Naive thymus-derived CD4-positive, alpha-beta T cell (primary cell): ENCODE measurements at regions of chr12 and their contacts with region 1.

Region 1: GRCh38 chr12:46675736-46676135 is 150.1 kb downstream of the SLC38A4 start:
- DNase-seq: peak in 5 of 9 donors; percentile 24 to 38 (median 34)
- ATAC-seq: no peak
- H3K4me3 ChIP-seq: no peak overlapping the region
- H3K4me3 Mint-ChIP-seq: no peak overlapping the region
- H3K27ac ChIP-seq: no peak overlapping the region
- H3K27ac Mint-ChIP-seq: no peak overlapping the region
- H3K4me1 ChIP-seq: no peaks in the 10 kb centered on the region
- H3K4me1 Mint-ChIP-seq: peaks cover 0 to 16% (median 0%) of the 10 kb centered on the region in 7 donors
- H3K27me3 ChIP-seq: no peaks in the 10 kb centered on the region
- H3K27me3 Mint-ChIP-seq: peaks cover 0 to 3% (median 0%) of the 10 kb centered on the region in 5 donors

Region 2: GRCh38 chr12:47021298-47021697 is 345.6 kb after region 1 on chr12:
- CTCF ChIA-PET with region 1: no interaction called
- POLR2A ChIA-PET with region 1: no interaction called
- intact Hi-C with region 1: loop called (anchors 1 to 5 kb)
- DNase-seq: peak in 7 of 9 donors; percentile 7 to 55 (median 51)
- ATAC-seq: peak; percentile 68
- H3K4me3 ChIP-seq: no peak overlapping the region
- H3K4me3 Mint-ChIP-seq: no peak overlapping the region
- H3K27ac ChIP-seq: no peak overlapping the region
- H3K27ac Mint-ChIP-seq: no peak overlapping the region
- H3K4me1 ChIP-seq: no peaks in the 10 kb centered on the region
- H3K4me1 Mint-ChIP-seq: no peaks in the 10 kb centered on the region
- H3K27me3 ChIP-seq: peaks cover 0 to 3% of the 10 kb centered on the region in 2 donors
- H3K27me3 Mint-ChIP-seq: peaks cover 4 to 31% (median 10%) of the 10 kb centered on the region in 5 donors

Region 3: GRCh38 chr12:47419497-47419896 is 743.8 kb after region 1 on chr12:
- CTCF ChIA-PET with region 1: no interaction called
- POLR2A ChIA-PET with region 1: no interaction called
- intact Hi-C with region 1: loop called in 1 of 2 experiments (anchors 10 kb)
- DNase-seq: no peak
- ATAC-seq: no peak
- H3K4me3 ChIP-seq: no peak overlapping the region
- H3K4me3 Mint-ChIP-seq: no peak overlapping the region
- H3K27ac ChIP-seq: no peak overlapping the region
- H3K27ac Mint-ChIP-seq: no peak overlapping the region
- H3K4me1 ChIP-seq: no peaks in the 10 kb centered on the region
- H3K4me1 Mint-ChIP-seq: peaks cover 3 to 26% (median 13%) of the 10 kb centered on the region in 7 donors
- H3K27me3 ChIP-seq: no peaks in the 10 kb centered on the region
- H3K27me3 Mint-ChIP-seq: no peaks in the 10 kb centered on the region

Region 4: DNA sequence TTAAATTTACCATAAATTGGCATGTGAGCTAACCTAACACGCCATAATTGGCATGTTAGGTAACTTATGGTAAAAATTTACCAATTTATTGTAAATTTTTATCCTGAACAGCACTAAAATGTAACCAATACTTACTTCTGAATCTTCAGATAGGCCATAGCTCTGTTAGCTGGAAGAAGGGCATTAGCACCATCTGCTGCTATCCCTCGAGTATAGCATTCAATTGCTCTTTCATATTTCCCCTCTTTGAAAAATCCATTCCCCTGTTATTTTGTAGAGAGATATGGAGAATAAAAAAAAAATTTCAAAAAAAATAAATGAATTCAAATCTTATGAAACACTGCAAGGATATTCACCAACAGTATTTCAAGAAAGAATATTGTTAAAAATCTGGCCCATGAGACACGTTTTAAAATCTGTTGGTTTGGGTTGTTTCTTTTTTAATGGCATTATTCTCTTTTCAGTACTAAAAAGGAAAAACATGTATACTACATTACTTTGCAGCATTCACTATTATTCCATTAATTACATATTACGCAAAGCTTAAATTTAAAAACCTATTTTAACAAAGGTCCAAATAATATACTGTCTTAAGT is 1011.0 kb after region 1 on chr12:
- CTCF ChIA-PET with region 1: interaction called, 3 read pairs
- POLR2A ChIA-PET with region 1: no interaction called
- intact Hi-C with region 1: loop called in 1 of 2 experiments (anchors 1 kb)
- DNase-seq: peak in 7 of 9 donors; percentile 21 to 53 (median 43)
- ATAC-seq: peak; percentile 76
- H3K4me3 ChIP-seq: no peak overlapping the region
- H3K4me3 Mint-ChIP-seq: no peak overlapping the region
- H3K27ac ChIP-seq: no peak overlapping the region
- H3K27ac Mint-ChIP-seq: no peak overlapping the region
- H3K4me1 ChIP-seq: peaks cover 0 to 3% of the 10 kb centered on the region in 2 donors
- H3K4me1 Mint-ChIP-seq: peaks cover 9 to 19% (median 14%) of the 10 kb centered on the region in 7 donors
- H3K27me3 ChIP-seq: no peaks in the 10 kb centered on the region
- H3K27me3 Mint-ChIP-seq: no peaks in the 10 kb centered on the region